ENCODE measurements at regions of chr13 and their contacts with region 1.

Region 1: GRCh38 chr13:72728290-72728605 is 525 bp downstream of the BORA start:
- DNase-seq: no peak
- CTCF ChIP-seq: no peak

Region 2: DNA sequence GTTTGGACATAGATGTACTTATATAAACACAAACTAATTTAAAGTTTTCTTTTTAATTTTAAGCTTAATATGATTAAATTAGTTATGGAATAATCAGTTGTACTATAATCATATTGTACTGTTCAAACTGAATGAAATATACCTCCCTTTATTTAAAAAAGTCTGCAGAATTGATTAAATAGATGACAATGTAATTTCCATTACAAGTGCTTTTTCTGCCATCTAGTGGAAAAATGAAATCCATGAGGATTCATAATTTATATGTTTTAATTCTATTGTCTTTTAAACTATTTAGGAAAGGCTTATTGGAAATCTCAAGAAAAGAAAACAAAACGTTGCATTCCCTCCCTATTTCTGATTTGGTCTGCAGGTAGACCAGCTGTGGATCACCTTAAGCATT is 31.7 kb before region 1 on chr13:
- CTCF ChIA-PET with region 1: no interaction called
- POLR2A ChIA-PET with region 1: no interaction called
- DNase-seq: no peak
- CTCF ChIP-seq: no peak

Region 3: GRCh38 chr13:72745260-72745659 is 17.0 kb after region 1 on chr13:
- CTCF ChIA-PET with region 1: interaction called, 13 read pairs
- POLR2A ChIA-PET with region 1: no interaction called
- DNase-seq: no peak
- CTCF ChIP-seq: no peak